ENCODE measurements at regions of chr1 and their contacts with region 1.

Region 1: DNA sequence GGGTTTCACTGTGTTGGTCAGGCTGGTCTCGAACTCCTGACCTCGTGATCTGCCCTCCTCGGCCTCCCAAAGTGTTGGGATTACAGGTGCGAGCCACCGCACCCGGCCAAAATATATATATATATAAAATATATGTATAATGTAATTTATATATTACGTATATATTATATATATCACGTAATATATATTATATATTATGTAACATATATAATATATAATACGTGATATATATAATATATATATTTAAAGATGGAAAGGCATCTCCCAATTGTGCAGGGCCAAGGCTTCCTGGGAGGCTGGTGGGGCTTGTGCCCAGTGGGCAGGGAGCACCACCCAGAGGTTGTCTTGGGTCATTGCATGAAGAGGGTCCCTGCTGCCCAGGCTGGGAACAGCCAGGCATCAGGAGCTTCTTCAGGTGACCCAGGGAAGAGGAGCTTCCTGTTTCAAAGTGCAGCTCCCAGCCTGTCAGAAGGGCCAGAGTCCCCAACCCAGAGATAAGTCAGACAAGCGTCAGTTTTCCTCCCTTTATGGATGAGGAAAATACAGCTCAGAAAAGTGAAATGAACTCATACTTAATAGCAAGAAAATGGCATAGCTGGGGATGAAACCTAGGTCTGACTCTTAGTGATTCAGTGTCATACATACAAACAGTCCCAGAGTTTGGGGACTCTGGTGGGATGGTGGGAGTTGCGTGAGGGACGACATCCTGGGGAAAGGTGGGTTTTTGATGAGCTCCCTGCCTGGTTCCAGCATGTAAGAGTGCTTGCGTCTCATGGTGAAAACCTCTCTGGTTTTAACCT is 12.0 kb downstream of the UBE2Q1 start:
- H3K4me3 ChIP-seq: no peak overlapping the region
- H3K27ac ChIP-seq: no peak overlapping the region
- H3K4me1 ChIP-seq: no peaks in the 10 kb centered on the region
- CTCF ChIP-seq: peak; percentile 64

Region 2: DNA sequence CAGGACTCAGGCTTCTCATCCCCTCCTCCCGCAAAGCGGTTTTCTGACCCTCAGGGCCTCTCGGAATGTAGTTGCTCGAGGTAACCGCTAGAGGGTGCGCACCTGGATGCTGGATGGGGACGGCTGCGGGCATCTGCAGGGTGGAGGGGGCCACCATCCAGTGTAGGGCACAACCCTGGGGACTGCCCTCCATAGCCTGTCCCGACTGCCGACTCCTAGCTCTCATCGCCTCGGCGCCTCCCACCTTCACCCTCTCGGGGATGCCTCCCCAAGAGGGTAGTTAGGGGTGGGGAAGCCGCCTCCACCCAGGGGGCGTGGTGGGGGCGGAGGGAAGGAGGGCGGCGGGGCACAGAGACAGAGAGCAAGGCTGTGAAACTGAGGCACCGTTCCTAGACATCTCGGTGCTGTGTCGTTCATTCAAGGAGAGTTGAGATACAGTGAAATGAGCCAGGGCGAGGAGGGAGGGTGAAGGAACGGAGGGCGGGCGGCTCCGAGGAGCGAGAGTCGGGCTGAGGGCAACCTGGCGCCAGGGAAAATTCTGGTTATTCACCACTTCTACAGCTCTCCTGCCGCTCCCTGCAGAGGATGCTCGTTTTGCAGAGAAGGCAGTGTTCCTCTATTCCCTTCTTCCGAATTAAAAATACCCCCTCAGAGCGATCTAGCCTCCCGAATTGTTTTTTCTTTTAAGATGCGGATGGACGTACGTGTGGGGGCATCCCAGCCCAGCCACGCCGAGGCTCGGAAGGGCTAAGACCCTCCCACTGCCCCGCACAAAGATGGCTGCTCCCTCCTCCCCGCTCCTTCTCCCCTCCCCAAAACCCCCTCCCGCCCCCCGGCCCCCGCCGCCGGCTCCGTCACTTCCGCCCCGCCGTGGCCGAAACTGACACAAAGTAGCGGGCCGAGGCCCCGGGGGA is 221.5 kb before region 1 on chr1 and contains the start of gene ATP8B2:
- CTCF ChIA-PET with region 1: interaction called, 15 read pairs
- POLR2A ChIA-PET with region 1: no interaction called
- H3K4me3 ChIP-seq: peak within 1 kb of the TSS; percentile 49
- H3K27ac ChIP-seq: peak within 1 kb of the TSS; percentile 25; the same call in 1 of the 2 replicates
- H3K4me1 ChIP-seq: peaks cover 12% of the 10 kb centered on the region
- CTCF ChIP-seq: peak; percentile 96

Region 3: GRCh38 chr1:154479764-154480421 is 66.6 kb before region 1 on chr1:
- CTCF ChIA-PET with region 1: interaction called, 205 read pairs
- POLR2A ChIA-PET with region 1: interaction called, 7 read pairs
- H3K4me3 ChIP-seq: no peak overlapping the region
- H3K27ac ChIP-seq: no peak overlapping the region
- H3K4me1 ChIP-seq: peaks cover 3% of the 10 kb centered on the region; the same call in 1 of the 2 replicates
- CTCF ChIP-seq: peak; percentile 64; the same call in 1 of the 2 replicates

Region 4: GRCh38 chr1:154490317-154490716 is 56.1 kb before region 1 on chr1:
- CTCF ChIA-PET with region 1: interaction called, 11 read pairs
- POLR2A ChIA-PET with region 1: no interaction called
- H3K4me3 ChIP-seq: no peak overlapping the region
- H3K27ac ChIP-seq: no peak overlapping the region
- H3K4me1 ChIP-seq: no peaks in the 10 kb centered on the region
- CTCF ChIP-seq: no peak

Region 5: DNA sequence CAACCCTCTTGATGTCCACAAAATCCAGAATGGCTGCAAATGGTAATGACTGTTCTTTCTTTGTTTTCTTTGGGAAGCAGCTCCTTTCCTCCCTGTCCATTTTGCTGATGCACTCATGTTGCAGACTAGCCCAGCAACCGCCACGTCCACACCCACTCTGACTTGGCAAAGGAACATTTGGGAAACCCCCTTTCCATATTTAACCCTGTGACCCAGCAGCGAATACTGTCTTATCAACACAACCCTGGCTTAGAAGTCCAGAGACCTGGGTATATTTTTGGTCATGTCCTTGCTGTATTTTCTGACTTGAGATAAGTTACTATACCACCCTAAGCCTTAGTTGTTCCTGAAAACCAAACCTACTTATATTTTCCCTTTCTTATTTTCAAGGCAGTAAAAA is 26.1 kb before region 1 on chr1:
- CTCF ChIA-PET with region 1: interaction called, 15 read pairs
- POLR2A ChIA-PET with region 1: interaction called, 6 read pairs
- H3K4me3 ChIP-seq: no peak overlapping the region
- H3K27ac ChIP-seq: no peak overlapping the region
- H3K4me1 ChIP-seq: no peaks in the 10 kb centered on the region
- CTCF ChIP-seq: no peak

Region 6: GRCh38 chr1:154533952-154534844 is 12.3 kb before region 1 on chr1:
- CTCF ChIA-PET with region 1: interaction called, 16 read pairs
- POLR2A ChIA-PET with region 1: interaction called, 5 read pairs
- H3K4me3 ChIP-seq: no peak overlapping the region
- H3K27ac ChIP-seq: no peak overlapping the region
- H3K4me1 ChIP-seq: no peaks in the 10 kb centered on the region
- CTCF ChIP-seq: peak; percentile 36; the same call in 1 of the 2 replicates

Region 7: DNA sequence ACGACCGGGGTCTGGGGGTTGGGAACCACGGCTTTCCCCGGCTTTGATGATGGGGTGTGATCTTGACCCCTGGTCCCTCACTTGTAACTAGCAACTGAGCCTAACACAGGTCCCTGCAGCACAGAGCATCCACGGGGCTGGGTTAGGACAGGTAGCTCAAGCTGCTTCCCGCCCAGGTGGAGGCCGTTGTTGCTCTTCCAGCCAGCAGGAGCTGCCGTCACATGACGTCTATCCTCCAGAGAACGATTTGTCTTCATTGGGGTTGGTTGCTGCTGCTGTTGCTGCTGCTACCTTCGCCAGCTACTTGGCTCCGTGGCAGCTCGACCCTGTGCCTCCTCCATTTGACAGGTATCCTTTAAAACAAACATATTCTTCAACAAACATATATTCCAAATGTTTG is 135.8 kb after region 1 on chr1:
- CTCF ChIA-PET with region 1: no interaction called
- POLR2A ChIA-PET with region 1: no interaction called
- H3K4me3 ChIP-seq: no peak overlapping the region
- H3K27ac ChIP-seq: no peak overlapping the region
- H3K4me1 ChIP-seq: 0 out of 2 replicates have a peak, but pooled peaks cover 3% of the 10 kb centered on the region
- CTCF ChIP-seq: no peak